Psoas muscle (tissue), 8 donors: ENCODE measurements at regions of chr11 and their contacts with region 1.

Region 1: GRCh38 chr11:68956142-68956541 is 24.6 kb downstream of the MRGPRD start:
- DNase-seq: peak in 1 of 2 donors; percentile 52
- ATAC-seq: no peak
- H3K4me3 ChIP-seq: no peak overlapping the region
- H3K27ac ChIP-seq: no peak overlapping the region
- H3K4me1 ChIP-seq: no peaks in the 10 kb centered on the region
- H3K27me3 ChIP-seq: peaks cover 0 to 4% (median 0%) of the 10 kb centered on the region in 3 donors
- CTCF ChIP-seq: no peak

Region 2: GRCh38 chr11:68976563-68976962 is 20.4 kb after region 1 on chr11:
- intact Hi-C with region 1: loop called in 1 of 2 experiments (anchors 2 kb)
- DNase-seq: peak in 1 of 2 donors; percentile 41
- ATAC-seq: no peak
- H3K4me3 ChIP-seq: no peak overlapping the region
- H3K27ac ChIP-seq: no peak overlapping the region
- H3K4me1 ChIP-seq: no peaks in the 10 kb centered on the region
- H3K27me3 ChIP-seq: peaks cover 0 to 14% (median 2%) of the 10 kb centered on the region in 3 donors
- CTCF ChIP-seq: no peak